B cell (primary cell): ENCODE measurements at regions of chr9 and their contacts with region 1.

Region 1: DNA sequence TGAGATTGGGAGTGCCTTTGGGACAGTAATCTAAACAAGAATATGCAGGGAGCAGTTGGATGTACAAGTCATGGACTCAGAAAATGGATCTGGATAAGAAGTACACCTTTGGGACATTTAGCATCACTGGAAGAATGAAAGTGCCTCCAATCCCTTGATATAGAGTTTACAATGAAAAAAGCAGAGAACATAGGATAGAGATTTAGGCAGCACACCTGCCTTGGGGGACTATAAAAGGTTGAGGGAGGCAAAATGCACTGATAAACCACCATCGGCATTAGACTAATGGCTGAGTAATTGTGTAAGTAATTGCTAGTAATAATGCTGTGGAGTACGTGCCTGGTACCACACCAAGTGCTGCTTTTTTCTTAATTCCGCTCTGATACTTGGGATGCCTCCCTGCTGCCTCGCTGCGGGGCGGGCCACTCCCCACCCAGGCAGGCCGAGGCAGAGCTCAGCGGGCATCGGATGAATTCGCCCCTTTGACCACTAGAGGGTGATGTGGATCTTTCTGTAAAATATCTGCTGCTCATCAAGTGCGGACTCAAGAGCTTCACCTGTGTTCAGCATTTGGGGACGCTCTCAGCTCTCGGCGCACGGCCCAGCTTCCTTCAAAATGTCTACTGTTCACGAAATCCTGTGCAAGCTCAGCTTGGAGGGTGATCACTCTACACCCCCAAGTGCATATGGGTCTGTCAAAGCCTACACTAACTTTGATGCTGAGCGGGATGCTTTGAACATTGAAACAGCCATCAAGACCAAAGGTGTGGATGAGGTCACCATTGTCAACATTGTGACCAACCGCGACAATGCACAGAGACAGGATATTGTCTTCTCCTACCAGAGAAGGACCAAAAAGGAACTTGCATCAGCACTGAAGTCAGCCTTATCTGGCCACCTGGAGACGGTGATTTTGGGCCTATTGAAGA is 99.9 kb downstream of the ANKRD18B start:
- DNase-seq: peak; percentile 82
- ATAC-seq: peak; percentile 92
- H3K4me3 ChIP-seq: no peak overlapping the region
- H3K4me3 Mint-ChIP-seq: no peak overlapping the region
- H3K27ac ChIP-seq: no peak overlapping the region
- H3K27ac Mint-ChIP-seq: no peak overlapping the region
- H3K4me1 ChIP-seq: no peaks in the 10 kb centered on the region
- H3K4me1 Mint-ChIP-seq: no peaks in the 10 kb centered on the region
- H3K27me3 ChIP-seq: peaks cover 0 to 13% (median 7%) of the 10 kb centered on the region in 4 experiments
- H3K27me3 Mint-ChIP-seq: peaks cover 40% of the 10 kb centered on the region
- CTCF ChIP-seq: peak; percentile 87

Region 2: DNA sequence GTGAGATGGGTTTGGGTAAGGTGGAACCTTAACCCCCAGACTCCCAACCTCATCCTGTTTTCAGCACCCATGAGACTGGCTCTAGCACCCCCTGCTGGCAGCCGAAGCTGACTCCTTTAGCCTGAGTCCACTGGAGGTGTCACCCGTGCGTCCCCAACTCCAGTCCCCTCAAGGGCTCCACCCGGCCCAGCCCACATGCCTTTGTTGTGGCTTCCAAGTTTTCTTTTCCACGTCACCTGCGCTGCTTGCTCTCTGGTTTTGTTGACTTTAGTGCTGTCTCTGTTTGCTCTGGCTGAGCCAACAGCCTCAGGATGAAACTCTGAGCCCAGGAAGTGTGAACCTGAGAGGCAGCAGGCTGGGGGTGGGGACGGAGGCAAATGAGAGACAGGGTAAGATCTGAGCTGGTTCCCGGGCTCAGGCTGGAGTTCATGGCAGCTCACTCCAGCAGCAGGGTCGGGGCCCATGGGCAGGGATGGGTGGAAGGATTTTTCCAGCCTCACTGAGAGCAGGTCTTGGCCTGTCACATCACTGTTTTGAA is 208.4 kb before region 1 on chr9:
- CTCF ChIA-PET with region 1: no interaction called
- POLR2A ChIA-PET with region 1: no interaction called
- intact Hi-C with region 1: no loop called
- DNase-seq: peak; percentile 51
- ATAC-seq: no peak
- H3K4me3 ChIP-seq: no peak overlapping the region
- H3K4me3 Mint-ChIP-seq: no peak overlapping the region
- H3K27ac ChIP-seq: no peak overlapping the region
- H3K27ac Mint-ChIP-seq: no peak overlapping the region
- H3K4me1 ChIP-seq: no peaks in the 10 kb centered on the region
- H3K4me1 Mint-ChIP-seq: no peaks in the 10 kb centered on the region
- H3K27me3 ChIP-seq: no peaks in the 10 kb centered on the region
- H3K27me3 Mint-ChIP-seq: peaks cover 15% of the 10 kb centered on the region
- CTCF ChIP-seq: peak; percentile 47

Region 3: DNA sequence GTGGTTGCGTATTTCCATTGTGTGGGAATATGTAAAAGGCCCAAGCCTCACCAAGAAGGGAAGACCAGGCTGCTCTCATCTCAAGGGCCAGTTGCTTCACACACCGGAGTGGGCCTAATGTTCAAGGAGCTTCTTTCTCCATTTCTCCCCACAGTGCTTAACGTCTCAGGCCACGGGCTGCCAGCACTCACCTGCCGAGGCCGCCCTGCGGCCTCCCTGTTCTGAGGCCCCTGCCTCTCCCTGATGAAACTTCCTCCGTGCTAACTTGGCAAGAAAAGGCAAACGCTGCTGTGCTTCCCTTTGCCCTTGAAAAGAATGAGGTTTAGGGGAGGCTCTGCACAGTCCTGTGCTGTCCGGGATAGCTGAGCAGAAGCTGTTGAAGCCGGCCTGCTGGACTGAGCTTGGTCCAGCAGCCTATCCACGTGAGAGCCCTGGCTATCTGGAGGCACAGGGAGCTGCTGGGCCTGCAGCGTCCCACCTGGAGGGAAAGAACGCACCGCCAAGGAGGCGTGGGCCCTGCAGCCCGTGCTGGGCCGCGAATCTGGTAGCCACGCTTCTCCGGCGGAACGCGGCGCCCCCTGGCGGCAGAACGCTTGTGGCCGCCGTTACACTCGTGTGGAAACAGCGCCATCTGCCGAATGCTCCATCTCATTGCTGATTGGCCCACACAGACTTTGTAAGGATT is 97.9 kb after region 1 on chr9:
- CTCF ChIA-PET with region 1: interaction called, 105 read pairs
- POLR2A ChIA-PET with region 1: no interaction called
- intact Hi-C with region 1: no loop called
- DNase-seq: peak; percentile 86
- ATAC-seq: peak; percentile 82
- H3K4me3 ChIP-seq: no peak overlapping the region
- H3K4me3 Mint-ChIP-seq: no peak overlapping the region
- H3K27ac ChIP-seq: no peak overlapping the region
- H3K27ac Mint-ChIP-seq: no peak overlapping the region
- H3K4me1 ChIP-seq: peaks cover 0 to 10% of the 10 kb centered on the region in 2 donors
- H3K4me1 Mint-ChIP-seq: peaks cover 3% of the 10 kb centered on the region
- H3K27me3 ChIP-seq: peaks cover 0 to 7% (median 0%) of the 10 kb centered on the region in 4 experiments
- H3K27me3 Mint-ChIP-seq: peaks cover 27% of the 10 kb centered on the region
- CTCF ChIP-seq: peak; percentile 100

Region 4: DNA sequence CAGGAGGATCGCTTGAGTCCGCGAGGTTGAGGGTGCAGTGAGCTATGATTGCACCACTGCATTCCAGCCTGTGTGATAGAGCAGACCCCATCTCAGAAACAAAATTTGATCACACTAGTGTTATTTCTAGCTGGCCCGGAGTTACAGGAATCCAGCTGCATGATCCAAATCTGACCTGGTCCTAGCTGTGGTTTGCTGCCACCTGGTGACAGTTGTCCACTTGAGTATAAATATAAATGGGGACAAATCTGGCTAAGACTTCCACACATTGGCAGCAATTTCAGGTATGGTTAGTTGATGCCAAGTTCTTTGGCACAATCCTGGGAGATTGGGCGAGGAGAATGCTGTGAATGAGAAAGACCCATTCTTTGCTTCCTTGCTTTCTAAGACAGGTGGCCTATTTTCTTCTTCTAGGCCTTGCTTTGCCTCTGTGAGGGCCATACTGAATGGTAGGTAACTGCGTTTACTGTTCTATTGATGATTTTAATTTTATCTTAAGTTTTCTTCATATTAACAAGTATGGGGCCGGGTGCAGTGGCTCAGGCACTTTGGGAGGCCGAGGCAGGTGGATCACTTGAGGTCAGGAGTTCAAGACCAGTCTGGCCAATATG is 228.4 kb after region 1 on chr9:
- CTCF ChIA-PET with region 1: interaction called, 13 read pairs
- POLR2A ChIA-PET with region 1: no interaction called
- intact Hi-C with region 1: no loop called
- DNase-seq: peak; percentile 77
- ATAC-seq: peak; percentile 83
- H3K4me3 ChIP-seq: no peak overlapping the region
- H3K4me3 Mint-ChIP-seq: no peak overlapping the region
- H3K27ac ChIP-seq: peak overlapping the region in 1 of 2 donors; percentile 37
- H3K27ac Mint-ChIP-seq: no peak overlapping the region
- H3K4me1 ChIP-seq: peaks cover 12 to 19% of the 10 kb centered on the region in 2 donors
- H3K4me1 Mint-ChIP-seq: peaks cover 39% of the 10 kb centered on the region
- H3K27me3 ChIP-seq: no peaks in the 10 kb centered on the region
- H3K27me3 Mint-ChIP-seq: no peaks in the 10 kb centered on the region
- CTCF ChIP-seq: peak; percentile 64

Region 5: GRCh38 chr9:34252670-34253459 is 628.9 kb after region 1 on chr9:
- CTCF ChIA-PET with region 1: interaction called, 5 read pairs
- POLR2A ChIA-PET with region 1: no interaction called
- intact Hi-C with region 1: loop called (anchors 2 kb)
- DNase-seq: peak; percentile 75
- ATAC-seq: peak; percentile 61
- H3K4me3 ChIP-seq: no peak overlapping the region
- H3K4me3 Mint-ChIP-seq: no peak overlapping the region
- H3K27ac ChIP-seq: no peak overlapping the region
- H3K27ac Mint-ChIP-seq: no peak overlapping the region
- H3K4me1 ChIP-seq: peaks cover 0 to 15% of the 10 kb centered on the region in 2 donors
- H3K4me1 Mint-ChIP-seq: peaks cover 13% of the 10 kb centered on the region
- H3K27me3 ChIP-seq: no peaks in the 10 kb centered on the region
- H3K27me3 Mint-ChIP-seq: no peaks in the 10 kb centered on the region
- CTCF ChIP-seq: peak; percentile 91

Region 6: GRCh38 chr9:34591248-34591916 is 967.5 kb after region 1 on chr9:
- CTCF ChIA-PET with region 1: interaction called, 8 read pairs
- POLR2A ChIA-PET with region 1: no interaction called
- intact Hi-C with region 1: loop called (anchors 10 kb)
- DNase-seq: peak; percentile 85
- ATAC-seq: peak; percentile 92
- H3K4me3 ChIP-seq: peak overlapping the region; percentile 38 to 73 (median 48)
- H3K4me3 Mint-ChIP-seq: peak overlapping the region; percentile 81
- H3K27ac ChIP-seq: no peak overlapping the region
- H3K27ac Mint-ChIP-seq: no peak overlapping the region
- H3K4me1 ChIP-seq: peaks cover 40 to 49% of the 10 kb centered on the region in 2 donors
- H3K4me1 Mint-ChIP-seq: peaks cover 37% of the 10 kb centered on the region
- H3K27me3 ChIP-seq: peaks cover 0 to 81% (median 60%) of the 10 kb centered on the region in 4 experiments
- H3K27me3 Mint-ChIP-seq: peaks cover 75% of the 10 kb centered on the region
- CTCF ChIP-seq: peak; percentile 95